ENCODE measurements at regions of chr3 and their contacts with region 1.

Region 1: GRCh38 chr3:170363471-170363994 is 6.0 kb downstream of the SKIL start:
- DNase-seq: no peak
- H3K4me3 ChIP-seq: peak overlapping the region; percentile 97
- H3K27ac ChIP-seq: peak overlapping the region; percentile 94
- H3K4me1 ChIP-seq: peaks cover 61% of the 10 kb centered on the region
- CTCF ChIP-seq: no peak

Region 2: GRCh38 chr3:170350515-170351413 is 12.8 kb before region 1 on chr3:
- CTCF ChIA-PET with region 1: interaction called, 3 read pairs
- POLR2A ChIA-PET with region 1: interaction called, 17 read pairs
- intact Hi-C with region 1: no loop called
- DNase-seq: peak; percentile 64
- H3K4me3 ChIP-seq: peak overlapping the region; percentile 63
- H3K27ac ChIP-seq: peak overlapping the region; percentile 78
- H3K4me1 ChIP-seq: peaks cover 68% of the 10 kb centered on the region
- CTCF ChIP-seq: no peak

Measured in OCI-LY7 (cell line).